Brain microvascular endothelial cell (primary cell): ENCODE measurements at regions of chr10 and their contacts with region 1.

Region 1: DNA sequence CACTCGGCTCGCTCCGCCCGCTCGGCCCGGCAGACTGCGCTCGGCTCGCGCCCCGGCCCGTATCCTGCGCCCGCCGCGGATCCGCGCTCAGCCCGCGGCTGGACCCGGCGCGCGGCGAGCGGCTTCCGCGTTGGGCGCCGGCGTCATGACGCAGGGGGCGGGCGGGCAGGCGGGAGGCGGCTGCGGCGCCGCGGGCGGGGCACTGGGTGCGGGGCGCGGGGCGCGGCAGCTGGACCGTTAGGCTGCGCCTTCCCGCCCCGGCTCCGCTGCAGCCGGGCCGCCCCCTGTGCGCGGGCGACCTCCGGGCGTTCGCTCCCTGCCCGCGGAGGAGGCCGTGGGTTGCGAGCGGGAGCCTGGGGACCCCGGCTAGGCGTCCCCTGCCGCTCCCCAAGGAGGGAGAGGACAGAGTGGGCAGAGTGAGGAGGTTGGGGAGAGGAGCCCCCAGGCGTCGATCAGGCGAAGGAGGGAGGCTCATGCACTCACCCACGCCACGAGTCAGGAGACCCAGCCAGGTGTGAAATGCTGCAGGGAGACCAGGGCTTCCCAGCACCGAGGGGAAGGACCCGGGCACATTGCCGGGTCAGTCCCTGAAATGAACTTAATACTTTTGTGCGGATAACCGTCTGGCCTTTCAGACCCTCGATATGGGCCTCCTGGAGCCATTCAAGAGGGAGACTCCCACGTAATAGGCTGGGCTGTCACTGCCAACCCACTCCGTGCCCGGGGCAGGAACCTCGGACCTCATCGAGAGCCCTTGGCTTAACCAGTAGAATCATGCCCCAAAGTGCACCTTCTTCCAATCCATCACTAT is at the start of gene PIP4K2A:
- DNase-seq: peak; percentile 21
- H3K4me3 ChIP-seq: peak within 1 kb of the TSS; percentile 92
- H3K27ac ChIP-seq: peak within 1 kb of the TSS; percentile 13
- H3K27me3 ChIP-seq: no peaks in the 10 kb centered on the region
- CTCF ChIP-seq: no peak

Region 2: DNA sequence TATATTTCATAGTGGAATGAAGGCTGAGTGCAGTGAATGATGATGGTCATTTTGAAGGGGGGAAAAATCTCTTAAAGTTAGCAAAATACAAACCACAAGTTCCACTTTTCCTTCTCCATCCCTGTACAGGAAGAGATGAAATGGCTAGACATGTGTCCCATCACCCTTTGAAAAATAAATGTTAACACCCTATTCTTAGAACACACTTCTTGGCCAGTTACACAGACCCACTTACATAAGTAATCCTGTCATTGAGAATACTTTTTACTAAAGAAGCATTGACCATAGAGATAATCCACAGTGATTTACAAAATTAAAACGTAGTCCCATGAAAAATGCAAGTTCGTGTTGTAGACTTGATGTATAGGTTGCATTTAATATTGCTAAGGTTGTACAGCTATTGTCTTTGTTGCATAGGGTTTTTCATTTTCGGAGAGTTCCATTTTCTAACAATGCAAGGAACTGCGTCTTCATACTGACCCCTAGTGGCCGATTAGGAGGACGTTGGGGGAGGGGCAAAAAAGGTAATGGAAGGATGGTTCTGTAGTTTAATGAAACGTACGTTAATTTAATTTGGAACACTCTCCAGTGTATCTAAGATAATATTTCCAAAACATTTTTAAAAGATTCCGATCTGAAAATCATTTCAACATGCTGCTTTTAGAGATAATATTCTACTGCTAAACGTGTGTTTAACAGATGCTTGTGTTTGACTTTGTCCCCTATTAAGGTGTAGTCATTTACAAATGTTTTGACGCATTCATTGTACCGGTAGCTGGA is 274.1 kb after region 1 on chr10:
- in situ Hi-C with region 1: loop called (anchors 25 kb)
- DNase-seq: peak; percentile 32
- H3K4me3 ChIP-seq: no peak overlapping the region
- H3K27ac ChIP-seq: no peak overlapping the region
- H3K27me3 ChIP-seq: peaks cover 9% of the 10 kb centered on the region
- CTCF ChIP-seq: peak; percentile 88